Kidney (tissue), 22 donors: ENCODE measurements at regions of chr11 and their contacts with region 1.

Region 1: DNA sequence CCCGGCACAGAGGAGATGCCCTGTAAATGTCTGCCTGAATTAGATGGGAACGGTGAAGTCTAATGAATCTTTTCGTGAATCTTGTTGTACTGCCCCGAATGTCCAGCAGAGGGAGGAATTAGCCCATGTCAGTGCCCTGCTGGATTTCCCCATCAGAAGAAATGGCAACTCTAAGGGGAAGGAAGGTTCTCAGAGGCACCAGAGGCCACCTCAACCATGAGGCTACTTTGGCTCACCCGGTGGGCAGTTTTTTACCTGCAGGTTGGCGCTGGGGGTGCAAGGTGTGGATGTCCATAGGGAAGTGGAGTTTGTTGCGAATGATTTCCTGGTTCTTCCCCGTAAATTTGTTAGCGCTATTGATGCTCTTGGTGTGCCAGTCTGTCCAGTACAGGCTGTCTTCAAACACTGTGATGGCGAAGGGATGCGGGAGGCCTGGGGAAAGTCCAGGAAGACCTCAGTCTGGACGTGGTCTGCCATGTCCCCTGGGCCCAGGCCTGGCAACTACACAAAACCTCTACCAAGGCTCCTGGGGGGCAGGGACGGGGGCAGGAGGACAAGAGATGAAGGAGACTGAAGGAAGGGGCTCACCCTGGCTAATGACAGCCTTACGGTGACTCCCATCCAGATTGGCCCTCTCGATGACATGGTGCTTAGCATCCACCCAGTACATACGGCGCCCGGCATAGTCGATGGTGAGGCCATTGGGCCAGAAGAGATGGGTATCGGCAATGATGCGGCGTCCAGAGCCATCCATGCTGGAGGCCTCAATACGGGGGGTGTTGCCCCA is 28.5 kb downstream of the LRP4 start:
- DNase-seq: peak in 4 of 5 donors; percentile 73 to 85 (median 78)
- H3K4me3 ChIP-seq: no peak overlapping the region
- H3K27ac ChIP-seq: no peak overlapping the region
- H3K4me1 ChIP-seq: no peaks in the 10 kb centered on the region
- H3K27me3 ChIP-seq: no peaks in the 10 kb centered on the region
- CTCF ChIP-seq: peak; percentile 89

Region 2: DNA sequence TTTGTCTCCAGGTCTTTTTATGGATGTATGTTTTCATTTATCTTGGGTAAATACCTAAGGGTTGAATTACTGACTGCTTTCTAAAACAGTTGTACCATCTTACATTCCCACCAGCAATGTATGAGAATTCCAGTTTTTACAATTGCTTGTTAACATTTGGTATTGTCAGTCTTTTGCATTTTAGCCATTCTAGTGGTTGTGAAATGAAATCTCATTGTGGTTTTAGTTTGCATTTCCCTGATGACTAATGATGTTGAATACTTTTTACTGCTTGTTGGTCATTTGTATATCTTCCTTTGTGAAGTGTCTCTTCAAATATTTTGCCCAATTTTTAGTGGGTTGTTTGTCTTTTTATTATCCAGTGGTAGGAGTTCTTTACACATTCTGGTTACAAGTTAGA is 194.0 kb after region 1 on chr11:
- intact Hi-C with region 1: no loop called
- DNase-seq: no peak
- H3K4me3 ChIP-seq: no peak overlapping the region
- H3K27ac ChIP-seq: no peak overlapping the region
- H3K4me1 ChIP-seq: no peaks in the 10 kb centered on the region
- H3K27me3 ChIP-seq: no peaks in the 10 kb centered on the region
- CTCF ChIP-seq: no peak

Region 3: GRCh38 chr11:47154616-47155570 is 265.0 kb after region 1 on chr11:
- intact Hi-C with region 1: loop called (anchors 5 kb)
- DNase-seq: no peak
- H3K4me3 ChIP-seq: no peak overlapping the region
- H3K27ac ChIP-seq: no peak overlapping the region
- H3K4me1 ChIP-seq: no peaks in the 10 kb centered on the region
- H3K27me3 ChIP-seq: no peaks in the 10 kb centered on the region
- CTCF ChIP-seq: no peak